Mucosa of descending colon (tissue), 3 donors: ENCODE measurements at regions of chr11 and their contacts with region 1.

Region 1: DNA sequence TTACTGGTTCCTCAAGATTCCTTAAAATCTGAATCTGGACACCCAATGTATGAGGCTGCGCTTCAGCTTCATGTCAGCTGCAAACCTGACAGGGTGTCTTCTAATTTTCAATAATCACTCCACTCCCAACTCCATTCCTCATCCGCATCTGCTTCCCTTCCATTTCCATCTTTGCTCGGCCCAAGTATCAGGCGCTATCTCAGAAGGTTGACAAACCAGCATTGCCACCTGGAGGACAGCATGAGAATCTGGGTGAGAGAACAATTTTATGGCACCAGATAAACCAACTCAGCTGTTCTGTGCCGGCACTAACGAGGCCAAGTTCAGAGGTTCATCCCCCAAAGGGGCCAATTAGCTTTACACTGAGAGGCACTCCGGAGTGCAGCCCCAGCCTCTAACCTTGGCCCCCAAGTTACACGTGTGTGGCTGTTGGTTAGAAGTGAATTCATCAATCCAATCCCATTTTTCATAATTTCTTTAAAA is 79.1 kb upstream of the LMO2 start:
- DNase-seq: peak in 1 of 3 donors; percentile 56
- ATAC-seq: peak; percentile 80
- H3K4me3 ChIP-seq: no peak overlapping the region
- H3K4me1 ChIP-seq: no peaks in the 10 kb centered on the region
- CTCF ChIP-seq: peak; percentile 36

Region 2: DNA sequence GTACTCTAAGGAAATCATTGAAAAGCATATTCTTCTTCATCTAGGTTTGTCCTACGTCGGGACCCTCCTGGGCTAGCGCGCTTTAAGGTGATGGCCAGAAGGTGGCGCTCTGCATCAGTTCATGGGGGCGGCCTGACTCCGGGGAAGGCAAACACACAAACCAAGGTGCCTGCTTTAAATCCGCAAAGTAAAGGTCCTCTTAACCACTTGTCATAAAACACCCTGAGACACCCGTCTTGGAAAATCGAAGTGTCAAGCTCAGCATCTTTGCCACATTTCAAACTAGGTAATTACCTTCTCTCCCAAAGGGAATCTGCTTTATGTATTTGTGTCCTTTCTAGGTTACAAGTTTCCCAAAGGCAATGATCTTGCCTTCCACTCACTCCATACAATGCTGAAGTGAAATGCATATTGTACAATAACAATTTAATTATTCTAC is 113.1 kb before region 1 on chr11:
- intact Hi-C with region 1: loop called (anchors 10 kb)
- DNase-seq: peak; percentile 69 to 79 (median 77)
- ATAC-seq: peak; percentile 83
- H3K4me3 ChIP-seq: no peak overlapping the region
- H3K4me1 ChIP-seq: no peaks in the 10 kb centered on the region
- CTCF ChIP-seq: peak; percentile 48

Region 3: GRCh38 chr11:33869481-33870422 is 101.3 kb before region 1 on chr11:
- intact Hi-C with region 1: loop called in 1 of 2 experiments (anchors 10 kb)
- DNase-seq: peak; percentile 35 to 60 (median 38)
- ATAC-seq: peak; percentile 77
- H3K4me3 ChIP-seq: peak overlapping the region; percentile 24
- H3K4me1 ChIP-seq: peaks cover 12% of the 10 kb centered on the region
- CTCF ChIP-seq: no peak